Mammary epithelial cell (primary cell): ENCODE measurements at regions of chr19 and their contacts with region 1.

Region 1: DNA sequence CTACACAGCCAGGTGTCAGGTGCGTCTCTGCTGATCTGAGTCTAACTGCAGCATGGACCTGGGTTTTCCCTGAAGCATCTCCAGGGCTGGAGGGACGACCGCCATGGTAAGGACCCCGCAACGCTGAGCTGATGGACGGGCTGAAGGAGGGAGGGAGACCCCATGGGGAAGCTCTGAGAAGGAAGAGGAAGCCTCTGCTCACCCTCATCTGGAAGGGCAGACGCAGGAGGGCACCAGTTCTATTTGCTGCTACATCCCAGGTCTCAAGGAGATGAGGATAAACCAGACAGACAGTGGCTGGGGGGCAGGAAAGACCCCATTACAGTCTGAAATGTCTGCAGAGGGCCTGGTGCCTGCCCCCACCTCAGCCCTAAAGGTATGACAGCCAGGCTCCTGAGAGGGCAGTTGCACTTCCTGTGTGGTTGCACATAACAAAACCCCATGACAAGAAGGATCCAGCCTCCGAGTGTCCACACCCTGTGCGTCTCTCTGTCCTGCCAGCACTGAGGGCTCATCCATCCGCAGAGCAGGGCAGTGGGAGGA is at the start of gene LILRA2:
- DNase-seq: no peak
- H3K4me3 ChIP-seq: no peak within 1 kb of the TSS
- H3K27ac ChIP-seq: no peak within 1 kb of the TSS
- H3K4me1 ChIP-seq: no peaks in the 10 kb centered on the region
- H3K27me3 ChIP-seq: no peaks in the 10 kb centered on the region
- CTCF ChIP-seq: no peak
- total RNA-seq, gene LILRA2: not detected

Region 2: GRCh38 chr19:54297760-54298305 is 275.6 kb before region 1 on chr19:
- CTCF ChIA-PET with region 1: no interaction called
- dilution Hi-C with region 1: no loop called
- in situ Hi-C with region 1: loop called in 1 of 2 experiments (anchors 10 kb)
- intact Hi-C with region 1: no loop called
- DNase-seq: no peak
- H3K4me3 ChIP-seq: no peak overlapping the region
- H3K27ac ChIP-seq: no peak overlapping the region
- H3K4me1 ChIP-seq: no peaks in the 10 kb centered on the region
- H3K27me3 ChIP-seq: no peaks in the 10 kb centered on the region
- CTCF ChIP-seq: no peak

Region 3: GRCh38 chr19:54526972-54527371 is 46.4 kb before region 1 on chr19:
- CTCF ChIA-PET with region 1: no interaction called
- dilution Hi-C with region 1: loop called (anchors 5 kb)
- in situ Hi-C with region 1: no loop called
- intact Hi-C with region 1: no loop called
- DNase-seq: no peak
- H3K4me3 ChIP-seq: no peak overlapping the region
- H3K27ac ChIP-seq: no peak overlapping the region
- H3K4me1 ChIP-seq: no peaks in the 10 kb centered on the region
- H3K27me3 ChIP-seq: no peaks in the 10 kb centered on the region
- CTCF ChIP-seq: no peak

Region 4: DNA sequence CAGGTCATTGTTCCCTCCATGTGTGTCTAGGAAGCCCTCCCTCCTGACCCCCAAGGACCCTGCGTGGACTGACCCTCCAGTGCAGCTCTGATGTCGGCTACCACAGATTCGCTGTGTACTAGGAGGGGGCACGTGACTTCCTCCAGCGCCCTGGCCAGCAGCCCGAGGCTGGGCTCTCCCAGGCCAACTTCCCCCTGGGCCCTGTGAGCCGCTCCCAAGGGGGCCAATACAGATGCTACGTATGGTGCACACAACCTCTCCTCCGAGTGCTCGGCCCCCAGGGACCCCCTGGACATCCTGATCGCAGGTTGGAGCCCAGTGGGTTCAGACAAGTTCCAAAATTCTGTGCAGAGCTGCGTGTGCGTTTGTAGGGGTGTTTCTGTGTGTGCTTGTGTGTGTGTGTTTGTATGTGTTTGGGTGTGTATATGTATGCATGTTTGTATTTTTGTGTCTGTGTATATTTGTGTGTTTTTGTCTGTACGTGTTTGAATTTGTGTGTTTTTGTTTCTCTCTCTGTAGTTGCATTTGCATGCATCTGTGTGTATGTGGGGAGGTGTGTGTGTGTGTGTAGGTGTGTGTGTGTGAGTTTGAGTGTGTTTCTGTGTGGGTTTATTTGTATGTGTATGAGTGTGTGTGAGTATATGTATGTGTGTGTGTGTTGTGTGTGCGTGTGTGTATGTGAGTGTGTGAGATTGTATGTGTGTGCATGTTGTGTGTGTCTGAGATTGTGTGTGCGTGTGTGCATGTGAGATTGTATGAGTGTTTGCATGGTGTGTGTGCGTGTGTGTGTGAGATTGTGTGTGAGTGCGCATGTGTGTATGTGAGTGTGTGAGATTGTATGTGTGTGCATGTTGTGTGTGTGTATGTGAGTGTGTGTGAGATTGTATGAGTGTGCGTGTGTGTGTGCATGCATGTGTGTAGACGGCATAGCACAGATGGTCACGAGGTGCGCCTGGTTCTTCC is 21.2 kb before region 1 on chr19:
- CTCF ChIA-PET with region 1: no interaction called
- dilution Hi-C with region 1: no loop called
- in situ Hi-C with region 1: no loop called
- intact Hi-C with region 1: no loop called
- DNase-seq: no peak
- H3K4me3 ChIP-seq: no peak overlapping the region
- H3K27ac ChIP-seq: no peak overlapping the region
- H3K4me1 ChIP-seq: no peaks in the 10 kb centered on the region
- H3K27me3 ChIP-seq: no peaks in the 10 kb centered on the region
- CTCF ChIP-seq: no peak

Region 5: DNA sequence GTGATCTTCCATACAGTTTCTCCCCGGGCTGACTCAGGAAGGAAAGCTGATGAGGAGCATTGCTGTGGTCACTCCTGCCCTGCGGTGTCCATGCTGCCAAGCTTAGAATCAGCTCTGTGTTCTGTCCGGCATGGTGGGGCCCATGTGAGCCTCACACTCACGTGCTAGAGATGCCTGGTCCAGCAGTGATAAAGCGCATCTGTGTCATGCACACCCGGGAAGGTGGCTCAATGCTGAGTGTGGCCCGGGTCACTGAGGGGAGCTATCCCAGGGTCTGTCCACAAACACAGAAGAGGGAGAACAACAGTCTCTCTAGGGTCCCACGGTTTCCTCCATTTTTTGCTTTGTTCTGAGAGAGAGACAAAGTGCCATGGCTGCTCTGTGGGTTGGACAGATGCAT is 53.4 kb after region 1 on chr19:
- CTCF ChIA-PET with region 1: no interaction called
- dilution Hi-C with region 1: loop called (anchors 5 kb)
- in situ Hi-C with region 1: no loop called
- intact Hi-C with region 1: no loop called
- DNase-seq: no peak
- H3K4me3 ChIP-seq: no peak overlapping the region
- H3K27ac ChIP-seq: no peak overlapping the region
- H3K4me1 ChIP-seq: no peaks in the 10 kb centered on the region
- H3K27me3 ChIP-seq: no peaks in the 10 kb centered on the region
- CTCF ChIP-seq: no peak

Region 6: GRCh38 chr19:55258828-55259539 is 685.6 kb after region 1 on chr19 and contains the start of gene PPP6R1:
- CTCF ChIA-PET with region 1: no interaction called
- dilution Hi-C with region 1: no loop called
- in situ Hi-C with region 1: no loop called
- intact Hi-C with region 1: no loop called
- DNase-seq: peak; percentile 100
- H3K4me3 ChIP-seq: peak within 1 kb of the TSS; percentile 82 to 95 (median 94)
- H3K27ac ChIP-seq: peak within 1 kb of the TSS; percentile 89
- H3K4me1 ChIP-seq: peaks cover 28% of the 10 kb centered on the region
- H3K27me3 ChIP-seq: no peaks in the 10 kb centered on the region
- CTCF ChIP-seq: peak in 1 of 2 donors; percentile 1
- total RNA-seq, gene PPP6R1: 28.3 to 74.2 TPM